Posterior vena cava (tissue), 2 donors: ENCODE measurements at regions of chr5 and their contacts with region 1.

Region 1: GRCh38 chr5:80268916-80269315 is 13.1 kb upstream of the SERINC5 start:
- DNase-seq: no peak

Region 2: DNA sequence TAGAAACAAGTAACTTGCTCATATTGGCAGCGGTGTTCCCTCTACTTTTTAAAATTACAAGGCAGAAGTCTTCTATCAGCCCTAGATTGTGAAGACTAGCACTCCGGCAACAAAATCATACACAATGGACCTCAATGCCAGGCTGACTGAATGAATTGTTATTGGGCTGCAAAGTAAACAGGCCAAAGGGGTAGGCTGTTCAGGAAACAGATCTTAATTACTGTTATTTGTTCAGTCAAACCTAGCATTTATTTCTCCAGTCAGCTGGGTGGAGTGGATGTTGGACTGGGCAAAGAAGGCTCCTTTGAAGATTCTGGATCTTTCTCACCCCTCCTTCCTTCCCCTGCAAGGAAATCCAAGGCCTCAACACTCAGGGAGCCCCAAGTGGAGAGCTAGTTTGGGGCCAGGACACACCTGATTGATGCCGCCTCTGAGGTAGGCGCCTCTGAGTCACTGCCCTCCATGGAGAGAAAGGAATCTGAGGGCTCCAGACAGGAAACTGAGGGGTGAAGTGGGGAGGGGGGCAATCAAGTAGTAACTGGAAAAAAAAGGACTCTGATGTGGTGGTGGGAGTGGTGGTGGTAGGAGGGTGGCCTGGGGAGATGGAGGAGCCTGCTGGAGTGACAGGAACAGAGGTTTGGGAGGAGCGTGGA is 48.5 kb before region 1 on chr5:
- intact Hi-C with region 1: loop called in 1 of 2 experiments (anchors 5 kb)
- DNase-seq: no peak

Region 3: GRCh38 chr5:80238778-80239679 is 29.9 kb before region 1 on chr5:
- intact Hi-C with region 1: no loop called
- DNase-seq: peak; percentile 86

Region 4: DNA sequence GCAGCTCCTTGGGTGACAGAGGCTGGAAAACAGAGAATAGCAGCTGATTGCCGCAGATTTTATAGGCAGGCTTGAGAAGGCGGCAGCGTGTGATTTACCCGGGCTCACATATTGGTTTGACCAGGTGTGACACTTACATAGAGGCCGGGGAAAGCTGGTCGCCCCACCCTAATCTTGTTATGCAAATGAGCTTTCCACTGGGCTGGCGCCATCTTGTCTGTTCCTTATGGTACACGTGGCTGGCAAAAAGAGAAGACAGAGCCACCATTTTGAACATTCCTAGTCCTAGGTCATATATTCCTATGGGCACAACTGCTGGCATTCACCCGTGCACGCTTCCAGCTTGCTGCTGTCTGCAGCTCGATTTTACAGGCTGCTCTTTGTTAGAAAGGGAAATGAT is 39.6 kb after region 1 on chr5:
- intact Hi-C with region 1: no loop called
- DNase-seq: no peak